ENCODE measurements at regions of chr20 and their contacts with region 1.

Region 1: DNA sequence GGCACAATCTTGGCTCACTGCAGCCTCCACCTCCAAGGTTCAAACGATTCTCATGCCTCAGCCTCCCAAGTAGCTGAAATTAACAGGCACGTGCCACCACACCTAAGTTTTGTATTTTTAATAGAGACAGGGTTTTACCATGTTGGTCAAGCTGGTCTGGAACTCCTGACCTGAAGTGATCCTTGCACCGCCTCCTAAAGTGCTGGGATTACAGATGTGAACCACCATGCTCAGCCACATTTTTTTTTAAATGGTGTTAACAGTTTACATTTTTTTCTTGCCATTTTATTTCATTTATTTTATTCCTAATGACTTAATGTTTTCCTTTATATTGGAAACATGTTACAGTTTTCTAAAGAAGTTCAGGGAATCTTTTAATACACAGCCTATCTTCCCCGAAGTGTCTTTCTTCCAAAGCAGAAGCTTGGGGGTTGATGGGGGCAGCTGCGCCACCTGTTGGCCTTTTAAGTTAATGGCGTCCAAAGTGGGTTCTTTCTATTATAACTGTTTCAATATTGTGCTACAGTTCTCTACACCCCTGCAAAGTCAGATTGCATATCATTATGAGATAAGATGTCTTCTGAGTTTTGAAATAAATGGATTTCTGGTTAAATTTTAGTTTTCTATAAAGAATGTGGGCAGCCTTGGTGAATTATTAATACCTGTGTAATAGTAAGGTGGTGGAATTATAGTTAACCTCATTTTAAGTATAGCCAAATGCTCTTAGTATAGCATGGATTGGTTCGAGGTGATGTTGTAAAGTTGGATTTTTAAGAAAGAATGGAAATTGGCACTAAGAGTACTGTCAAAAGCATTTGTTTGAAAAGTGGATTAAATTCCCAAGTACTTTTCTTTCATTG is 42.0 kb upstream of the PLCG1 start:
- DNase-seq: peak; percentile 57
- H3K4me3 ChIP-seq: no peak overlapping the region
- H3K27ac ChIP-seq: no peak overlapping the region
- H3K4me1 ChIP-seq: no peaks in the 10 kb centered on the region
- H3K27me3 ChIP-seq: no peaks in the 10 kb centered on the region
- CTCF ChIP-seq: peak; percentile 85

Region 2: DNA sequence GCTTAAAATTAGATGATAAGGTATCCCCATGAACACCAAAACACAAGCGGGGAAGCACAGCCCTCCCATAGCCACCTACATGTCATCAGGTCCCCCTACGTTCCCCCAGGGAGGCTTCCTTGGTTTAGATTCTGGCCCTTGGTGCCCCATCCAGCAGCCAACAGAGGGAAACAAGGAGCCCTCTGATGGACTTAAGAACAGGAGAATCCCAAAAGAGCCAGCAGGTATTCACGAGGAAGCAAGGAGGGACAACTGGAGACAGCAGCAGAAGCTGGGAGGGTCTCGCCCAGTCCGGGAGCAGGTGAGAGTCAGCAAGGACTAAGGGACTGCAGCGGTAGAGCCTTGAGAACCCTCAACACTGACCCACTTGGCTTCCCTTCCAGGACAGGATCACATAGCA is 125.1 kb before region 1 on chr20:
- intact Hi-C with region 1: loop called (anchors 2 kb)
- DNase-seq: peak; percentile 15
- H3K4me3 ChIP-seq: no peak overlapping the region
- H3K27ac ChIP-seq: no peak overlapping the region
- H3K4me1 ChIP-seq: no peaks in the 10 kb centered on the region
- H3K27me3 ChIP-seq: no peaks in the 10 kb centered on the region
- CTCF ChIP-seq: no peak

Region 3: DNA sequence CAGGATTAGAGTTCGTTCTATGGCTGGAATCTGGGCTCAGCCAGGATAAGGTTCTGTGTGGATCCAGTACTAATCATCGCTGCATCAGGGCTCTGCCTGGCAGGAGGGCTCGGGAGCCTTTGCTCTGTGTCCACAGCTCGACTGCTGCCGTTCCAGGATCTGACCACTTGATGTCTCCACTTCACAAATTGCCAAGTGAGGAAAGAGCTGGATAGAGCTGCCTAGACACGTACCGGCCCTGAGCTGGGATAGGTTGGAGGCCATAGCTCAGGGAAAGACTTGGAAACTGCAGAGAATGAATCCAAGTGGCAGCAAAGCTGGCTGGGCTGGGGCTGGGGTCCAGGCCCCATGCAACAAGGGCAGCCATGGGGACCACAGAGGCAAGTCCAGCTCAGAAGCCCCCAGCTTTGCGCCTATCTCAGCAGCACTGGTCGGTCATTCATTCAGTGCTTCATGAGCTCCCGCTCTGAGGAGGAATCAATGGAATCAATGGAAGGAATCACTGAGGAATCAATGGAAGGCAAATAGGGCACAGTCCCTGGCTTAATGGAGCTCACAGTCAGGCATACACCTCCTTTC is 104.7 kb before region 1 on chr20:
- intact Hi-C with region 1: loop called (anchors 2 kb)
- DNase-seq: peak; percentile 84
- H3K4me3 ChIP-seq: no peak overlapping the region
- H3K27ac ChIP-seq: no peak overlapping the region
- H3K4me1 ChIP-seq: no peaks in the 10 kb centered on the region
- H3K27me3 ChIP-seq: no peaks in the 10 kb centered on the region
- CTCF ChIP-seq: peak; percentile 67

Measured in colonic mucosa (tissue), 4 donors.